ENCODE measurements at regions of chr7 and their contacts with region 1.

Region 1: GRCh38 chr7:149714050-149714909 is 59.1 kb downstream of the ZNF467 start:
- DNase-seq: peak; percentile 94
- H3K4me3 ChIP-seq: peak overlapping the region; percentile 59 to 84 (median 75)
- H3K27ac ChIP-seq: peak overlapping the region; percentile 78 to 84 (median 82)
- H3K4me1 ChIP-seq: peaks cover 0 to 45% (median 28%) of the 10 kb centered on the region in 4 donors
- H3K27me3 ChIP-seq: no peaks in the 10 kb centered on the region
- CTCF ChIP-seq: no peak
- EP300 ChIP-seq: no peak
- POLR2A ChIP-seq: no peak

Region 2: GRCh38 chr7:149624419-149625339 is 89.6 kb before region 1 on chr7:
- intact Hi-C with region 1: loop called (anchors 2 kb)
- DNase-seq: peak; percentile 96
- H3K4me3 ChIP-seq: peak overlapping the region; percentile 82 to 100 (median 93)
- H3K27ac ChIP-seq: peak overlapping the region; percentile 89 to 95 (median 92)
- H3K4me1 ChIP-seq: peaks cover 0 to 30% (median 23%) of the 10 kb centered on the region in 4 donors
- H3K27me3 ChIP-seq: no peaks in the 10 kb centered on the region
- CTCF ChIP-seq: peak; percentile 49 to 98 (median 82)
- EP300 ChIP-seq: no peak
- POLR2A ChIP-seq: peak; percentile 16 to 32

Region 3: GRCh38 chr7:149670288-149670687 is 44.0 kb before region 1 on chr7:
- intact Hi-C with region 1: loop called (anchors 2 kb)
- DNase-seq: peak; percentile 87
- H3K4me3 ChIP-seq: peak overlapping the region in 1 of 4 donors; percentile 5
- H3K27ac ChIP-seq: peak overlapping the region in 3 of 4 donors; percentile 58 to 70 (median 60)
- H3K4me1 ChIP-seq: peaks cover 0 to 14% (median 5%) of the 10 kb centered on the region in 4 donors
- H3K27me3 ChIP-seq: no peaks in the 10 kb centered on the region
- CTCF ChIP-seq: no peak
- EP300 ChIP-seq: no peak
- POLR2A ChIP-seq: no peak

Region 4: GRCh38 chr7:149838224-149838947 is 124.1 kb after region 1 on chr7 and contains the start of gene ZNF862:
- intact Hi-C with region 1: loop called (anchors 2 kb)
- DNase-seq: peak; percentile 99
- H3K4me3 ChIP-seq: peak within 1 kb of the TSS; percentile 74 to 100 (median 96)
- H3K27ac ChIP-seq: peak within 1 kb of the TSS; percentile 89 to 98 (median 98)
- H3K4me1 ChIP-seq: peaks cover 0 to 15% (median 9%) of the 10 kb centered on the region in 4 donors
- H3K27me3 ChIP-seq: no peaks in the 10 kb centered on the region
- CTCF ChIP-seq: no peak
- EP300 ChIP-seq: no peak
- POLR2A ChIP-seq: peak; percentile 51 to 57
- total RNA-seq, gene ZNF862: 12.5 to 23.8 (median 15.9) TPM